Endothelial cell of umbilical vein (primary cell): ENCODE measurements at regions of chr10 and their contacts with region 1.

Region 1: DNA sequence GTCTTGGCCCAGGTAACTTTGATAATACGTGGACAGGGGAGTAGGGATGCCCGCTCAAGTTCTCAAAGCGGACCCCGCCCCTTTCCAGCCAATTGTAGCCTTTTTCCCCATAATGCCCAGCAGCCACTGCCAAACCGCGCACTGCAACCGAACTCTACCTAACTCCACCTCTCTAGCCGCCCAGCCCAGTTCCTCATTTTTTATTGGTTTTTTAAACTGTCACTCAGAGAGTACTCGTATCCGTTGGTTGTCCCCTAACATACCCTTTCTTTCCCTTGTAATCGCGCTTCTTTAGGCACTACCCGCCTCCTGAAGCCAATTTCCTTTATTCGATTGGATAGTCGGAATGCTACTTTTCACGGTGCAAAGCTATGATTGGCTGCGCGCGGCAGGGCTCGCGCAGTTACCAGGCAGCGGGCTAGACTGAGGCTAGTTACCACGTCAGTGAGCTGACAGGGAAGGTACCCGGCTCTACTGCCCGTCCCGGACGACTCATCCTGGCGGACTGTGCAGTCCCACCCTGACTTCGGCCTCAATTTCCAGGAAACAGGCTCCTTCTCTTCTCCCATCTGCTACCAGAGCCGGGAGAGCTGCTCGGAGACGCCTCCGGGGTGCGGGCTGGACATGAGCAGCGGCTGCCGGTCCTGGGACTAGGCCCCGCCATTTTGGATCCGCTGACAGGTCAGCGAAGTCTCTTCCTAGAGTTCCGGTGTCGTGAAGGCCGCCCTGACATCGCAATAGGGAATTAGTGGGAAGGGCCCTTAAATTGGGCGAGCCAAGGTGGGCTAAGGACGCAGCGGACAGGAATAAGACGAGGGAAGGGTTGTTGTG is at the start of gene GBF1:
- DNase-seq: peak; percentile 100
- H3K4me3 ChIP-seq: peak within 1 kb of the TSS; percentile 59 to 90 (median 85)
- H3K27ac ChIP-seq: peak within 1 kb of the TSS; percentile 61
- H3K4me1 ChIP-seq: peaks cover 29% of the 10 kb centered on the region
- H3K27me3 ChIP-seq: peaks cover 8% of the 10 kb centered on the region in 2 experiments
- CTCF ChIP-seq: no peak
- POLR2A ChIP-seq: peak; percentile 83
- total RNA-seq, gene GBF1: 45.7 and 49.7 TPM in 2 replicates

Region 2: GRCh38 chr10:102255404-102255803 is 10.1 kb after region 1 on chr10:
- CTCF ChIA-PET with region 1: no interaction called
- POLR2A ChIA-PET with region 1: no interaction called
- dilution Hi-C with region 1: no loop called
- intact Hi-C with region 1: no loop called
- DNase-seq: no peak
- H3K4me3 ChIP-seq: no peak overlapping the region
- H3K27ac ChIP-seq: no peak overlapping the region
- H3K4me1 ChIP-seq: no peaks in the 10 kb centered on the region
- H3K27me3 ChIP-seq: no peaks in the 10 kb centered on the region
- CTCF ChIP-seq: no peak
- POLR2A ChIP-seq: no peak

Region 3: GRCh38 chr10:102280397-102281101 is 35.2 kb after region 1 on chr10:
- CTCF ChIA-PET with region 1: interaction called, 3 read pairs
- POLR2A ChIA-PET with region 1: interaction called, 5 read pairs
- dilution Hi-C with region 1: no loop called
- intact Hi-C with region 1: loop called (anchors 5 kb)
- DNase-seq: peak; percentile 81
- H3K4me3 ChIP-seq: peak overlapping the region in 1 of 3 experiments; percentile 16
- H3K27ac ChIP-seq: peak overlapping the region; percentile 40
- H3K4me1 ChIP-seq: peaks cover 22% of the 10 kb centered on the region
- H3K27me3 ChIP-seq: no peaks in the 10 kb centered on the region
- CTCF ChIP-seq: no peak
- POLR2A ChIP-seq: no peak

Region 4: DNA sequence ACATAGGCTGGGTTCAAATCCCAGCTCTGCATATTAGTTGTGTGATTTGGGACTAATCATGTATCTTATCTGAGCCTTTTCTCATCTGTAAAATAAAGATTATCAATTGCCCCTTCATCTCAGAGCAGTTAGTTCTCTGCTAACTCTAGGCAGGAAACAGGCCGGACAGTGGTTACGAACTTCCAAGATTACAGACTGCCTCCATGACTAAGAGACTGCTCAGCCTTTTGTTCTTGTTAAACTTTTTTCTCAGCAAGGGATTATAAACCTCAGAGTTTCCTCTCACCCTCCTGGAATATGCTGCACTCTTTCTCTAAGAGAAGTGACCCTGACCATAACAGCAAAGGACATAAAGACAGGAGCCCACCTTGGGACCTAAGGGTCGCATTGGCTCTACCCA is 97.6 kb after region 1 on chr10:
- CTCF ChIA-PET with region 1: interaction called, 1,402 read pairs
- POLR2A ChIA-PET with region 1: no interaction called
- dilution Hi-C with region 1: no loop called
- intact Hi-C with region 1: loop called (anchors 5 kb)
- DNase-seq: peak; percentile 77
- H3K4me3 ChIP-seq: no peak overlapping the region
- H3K27ac ChIP-seq: peak overlapping the region; percentile 67
- H3K4me1 ChIP-seq: peaks cover 29% of the 10 kb centered on the region
- H3K27me3 ChIP-seq: no peaks in the 10 kb centered on the region
- CTCF ChIP-seq: no peak
- POLR2A ChIP-seq: no peak